ENCODE measurements at regions of chr2 and their contacts with region 1.

Region 1: GRCh38 chr2:224944707-224945547 is 97.3 kb downstream of the DOCK10 start:
- DNase-seq: no peak
- H3K4me3 ChIP-seq: no peak overlapping the region
- CTCF ChIP-seq: no peak

Region 2: DNA sequence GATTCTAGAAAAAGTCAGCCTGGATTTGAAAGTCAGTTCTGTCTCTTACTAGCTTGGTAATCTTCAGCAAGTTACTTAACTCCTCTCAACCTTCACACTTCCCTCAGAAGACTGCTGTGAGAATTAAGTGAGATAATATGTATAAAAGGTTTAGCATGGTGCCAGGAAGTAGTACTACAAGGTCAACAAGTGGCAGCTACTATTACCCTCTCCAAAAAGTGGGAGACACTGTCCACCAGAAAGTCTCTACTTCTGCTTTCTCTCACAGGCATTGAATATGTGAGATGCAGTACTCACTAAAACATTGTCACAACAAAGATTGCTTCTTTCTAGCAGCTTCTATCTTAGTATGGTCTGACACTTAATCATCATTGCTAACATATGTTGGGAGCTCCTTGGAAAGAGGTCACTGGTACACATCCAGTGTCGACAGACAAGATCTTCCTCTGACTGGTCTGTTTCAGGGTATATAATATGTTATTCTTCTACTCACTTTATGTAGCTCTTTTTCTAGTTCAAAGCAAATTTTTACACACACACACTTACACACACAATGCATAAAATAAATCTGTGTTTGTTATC is 49.4 kb after region 1 on chr2:
- in situ Hi-C with region 1: loop called (anchors 5 kb)
- DNase-seq: no peak
- H3K4me3 ChIP-seq: no peak overlapping the region
- CTCF ChIP-seq: no peak